GM10248 (cell line): ENCODE measurements at regions of chr3 and their contacts with region 1.

Region 1: GRCh38 chr3:102529452-102529851 is 94.6 kb downstream of the ZPLD1 start:
- DNase-seq: no peak
- CTCF ChIP-seq: no peak

Region 2: DNA sequence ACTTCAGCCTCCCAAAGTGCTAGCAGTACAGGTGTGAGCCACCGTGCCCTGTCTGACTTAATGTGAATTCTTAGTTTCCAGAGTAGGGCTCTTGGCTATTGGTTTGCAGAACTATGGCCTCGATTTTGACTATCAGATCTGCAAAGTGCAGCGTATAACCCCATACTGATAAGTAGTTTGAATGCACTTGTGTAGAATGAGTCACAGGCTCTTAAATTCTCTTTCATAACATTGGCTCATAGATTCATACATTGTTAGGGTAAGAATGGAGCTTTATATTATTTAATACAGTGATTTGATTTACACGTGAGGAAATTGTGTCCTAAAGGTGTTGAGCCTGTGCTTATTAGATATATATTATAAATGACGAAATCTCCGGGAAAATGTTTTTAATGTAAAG is 15.3 kb after region 1 on chr3:
- CTCF ChIA-PET with region 1: interaction called, 21 read pairs
- POLR2A ChIA-PET with region 1: no interaction called
- DNase-seq: no peak
- CTCF ChIP-seq: no peak